Transverse colon (tissue), 4 donors: ENCODE measurements at regions of chr2 and their contacts with region 1.

Region 1: GRCh38 chr2:73176881-73177644 is 25.3 kb upstream of the NOTO start:
- DNase-seq: peak; percentile 92
- H3K4me3 ChIP-seq: peak overlapping the region; percentile 23 to 53 (median 44)
- H3K27ac ChIP-seq: peak overlapping the region; percentile 50 to 78 (median 68)
- H3K4me1 ChIP-seq: peaks cover 15 to 26% (median 25%) of the 10 kb centered on the region in 4 donors
- H3K27me3 ChIP-seq: peaks cover 60% of the 10 kb centered on the region
- CTCF ChIP-seq: peak; percentile 96 to 99 (median 98)
- EP300 ChIP-seq: no peak
- POLR2A ChIP-seq: no peak

Region 2: DNA sequence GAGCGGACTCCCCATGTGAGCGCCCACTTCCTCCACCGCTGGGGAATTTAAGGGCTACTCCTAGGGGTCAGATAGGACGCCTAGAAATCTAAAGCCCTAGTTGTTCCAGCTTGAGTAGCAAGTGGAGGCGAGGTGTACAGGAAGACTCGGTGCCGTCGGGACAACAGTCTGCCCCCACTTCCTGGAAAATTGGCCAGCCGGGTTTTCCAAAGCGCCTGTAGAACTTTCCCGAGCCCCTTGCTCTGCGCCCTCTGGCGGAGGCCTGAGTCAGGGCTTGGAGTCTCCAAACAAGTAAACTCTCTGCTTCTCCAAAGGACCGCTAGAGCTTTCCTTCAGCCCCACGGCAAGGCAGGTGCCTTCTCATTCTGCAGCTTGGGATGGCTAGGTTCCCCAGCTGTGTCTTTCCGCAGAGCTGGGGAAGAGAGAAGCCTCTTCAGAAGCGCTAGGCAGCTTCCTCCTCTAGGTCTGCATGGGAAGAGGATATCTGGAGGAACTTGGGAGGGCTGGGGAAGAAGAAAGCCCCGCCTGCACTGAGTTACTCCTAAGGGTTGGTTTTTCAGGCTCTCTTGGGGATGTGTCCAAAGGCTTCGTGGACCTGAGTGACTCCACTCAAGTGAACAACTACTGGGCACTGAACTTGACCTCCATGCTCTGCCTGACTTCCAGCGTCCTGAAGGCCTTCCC is 289.2 kb before region 1 on chr2:
- in situ Hi-C with region 1: loop called in 2 of 4 experiments (anchors 25 kb)
- intact Hi-C with region 1: loop called (anchors 10 kb)
- DNase-seq: peak; percentile 93
- H3K4me3 ChIP-seq: peak overlapping the region; percentile 68 to 95 (median 72)
- H3K27ac ChIP-seq: peak overlapping the region; percentile 91 to 95 (median 92)
- H3K4me1 ChIP-seq: peaks cover 5 to 43% (median 27%) of the 10 kb centered on the region in 4 donors
- H3K27me3 ChIP-seq: peaks cover 11% of the 10 kb centered on the region
- CTCF ChIP-seq: peak; percentile 85 to 93 (median 91)
- EP300 ChIP-seq: no peak
- POLR2A ChIP-seq: no peak

Region 3: GRCh38 chr2:72993147-72993932 is 183.7 kb before region 1 on chr2:
- in situ Hi-C with region 1: loop called in 1 of 4 experiments (anchors 25 kb)
- intact Hi-C with region 1: loop called (anchors 5 kb)
- DNase-seq: no peak
- H3K4me3 ChIP-seq: no peak overlapping the region
- H3K27ac ChIP-seq: no peak overlapping the region
- H3K4me1 ChIP-seq: no peaks in the 10 kb centered on the region
- H3K27me3 ChIP-seq: no peaks in the 10 kb centered on the region
- CTCF ChIP-seq: peak; percentile 81 to 88 (median 86)
- EP300 ChIP-seq: no peak
- POLR2A ChIP-seq: no peak

Region 4: GRCh38 chr2:73071360-73072133 is 105.5 kb before region 1 on chr2 and contains the start of gene SFXN5:
- in situ Hi-C with region 1: no loop called
- intact Hi-C with region 1: loop called (anchors 5 kb)
- DNase-seq: peak; percentile 99
- H3K4me3 ChIP-seq: peak within 1 kb of the TSS; percentile 70 to 94 (median 85)
- H3K27ac ChIP-seq: peak within 1 kb of the TSS; percentile 94 to 97 (median 96)
- H3K4me1 ChIP-seq: peaks cover 12 to 26% (median 20%) of the 10 kb centered on the region in 4 donors
- H3K27me3 ChIP-seq: no peaks in the 10 kb centered on the region
- CTCF ChIP-seq: peak in 3 of 5 experiments; percentile 28 to 47 (median 39)
- EP300 ChIP-seq: no peak
- POLR2A ChIP-seq: peak; percentile 82
- total RNA-seq, gene SFXN5: 12.3 to 98.4 (median 42.7) TPM